CD4-positive, alpha-beta T cell (primary cell): ENCODE measurements at regions of chr11 and their contacts with region 1.

Region 1: DNA sequence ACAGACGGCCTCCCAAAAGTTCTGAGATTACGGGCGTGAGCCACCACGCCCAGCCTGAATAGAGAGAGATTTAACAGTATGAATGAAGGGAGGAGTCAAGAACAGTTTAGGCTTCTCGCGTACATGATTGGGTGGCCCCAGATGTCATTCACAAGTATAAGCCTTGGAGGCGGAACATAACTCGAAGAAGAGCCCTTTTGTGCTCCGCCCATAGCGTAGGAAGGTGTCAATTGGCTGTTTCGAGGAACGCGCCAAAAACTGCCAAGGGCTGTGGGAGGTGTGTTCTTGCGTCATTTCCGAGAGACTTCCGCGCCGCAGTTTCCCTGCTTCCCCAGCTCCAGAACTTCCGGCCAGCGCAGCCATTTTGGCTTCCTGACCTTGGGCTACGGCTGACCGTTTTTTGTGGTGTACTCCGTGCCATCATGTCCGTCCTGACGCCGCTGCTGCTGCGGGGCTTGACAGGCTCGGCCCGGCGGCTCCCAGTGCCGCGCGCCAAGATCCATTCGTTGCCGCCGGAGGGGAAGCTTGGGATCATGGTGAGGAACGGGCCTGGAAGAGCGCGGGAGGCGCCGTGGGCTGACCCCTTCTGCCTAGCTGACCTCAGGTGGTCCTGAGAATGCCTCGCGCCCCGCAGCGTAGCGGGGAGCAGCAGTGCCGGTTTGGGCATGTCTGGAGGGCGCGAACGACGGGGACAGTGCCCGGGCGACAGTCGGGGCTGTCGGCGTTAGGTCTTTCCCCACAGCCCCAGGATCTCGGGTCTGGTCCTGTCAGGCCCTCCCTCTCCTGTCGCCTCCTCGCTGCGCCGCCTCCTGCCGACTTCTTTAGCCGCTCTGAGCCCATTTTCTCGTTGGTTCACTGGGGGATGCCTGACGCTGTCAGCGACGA is at the start of gene COX8A:
- DNase-seq: peak; percentile 85 to 99 (median 90)
- ATAC-seq: peak; percentile 99
- H3K4me3 ChIP-seq: peak within 1 kb of the TSS; percentile 94
- H3K4me3 Mint-ChIP-seq: peak within 1 kb of the TSS; percentile 100
- H3K27ac ChIP-seq: peak within 1 kb of the TSS; percentile 90 to 95
- H3K27ac Mint-ChIP-seq: peak within 1 kb of the TSS; percentile 99
- H3K4me1 ChIP-seq: peaks cover 27% of the 10 kb centered on the region
- H3K4me1 Mint-ChIP-seq: peaks cover 25% of the 10 kb centered on the region
- H3K27me3 ChIP-seq: peaks cover 0 to 4% of the 10 kb centered on the region in 2 experiments
- H3K27me3 Mint-ChIP-seq: no peaks in the 10 kb centered on the region
- CTCF ChIP-seq: no peak
- total RNA-seq, gene COX8A: 89.1 to 105 TPM

Region 2: DNA sequence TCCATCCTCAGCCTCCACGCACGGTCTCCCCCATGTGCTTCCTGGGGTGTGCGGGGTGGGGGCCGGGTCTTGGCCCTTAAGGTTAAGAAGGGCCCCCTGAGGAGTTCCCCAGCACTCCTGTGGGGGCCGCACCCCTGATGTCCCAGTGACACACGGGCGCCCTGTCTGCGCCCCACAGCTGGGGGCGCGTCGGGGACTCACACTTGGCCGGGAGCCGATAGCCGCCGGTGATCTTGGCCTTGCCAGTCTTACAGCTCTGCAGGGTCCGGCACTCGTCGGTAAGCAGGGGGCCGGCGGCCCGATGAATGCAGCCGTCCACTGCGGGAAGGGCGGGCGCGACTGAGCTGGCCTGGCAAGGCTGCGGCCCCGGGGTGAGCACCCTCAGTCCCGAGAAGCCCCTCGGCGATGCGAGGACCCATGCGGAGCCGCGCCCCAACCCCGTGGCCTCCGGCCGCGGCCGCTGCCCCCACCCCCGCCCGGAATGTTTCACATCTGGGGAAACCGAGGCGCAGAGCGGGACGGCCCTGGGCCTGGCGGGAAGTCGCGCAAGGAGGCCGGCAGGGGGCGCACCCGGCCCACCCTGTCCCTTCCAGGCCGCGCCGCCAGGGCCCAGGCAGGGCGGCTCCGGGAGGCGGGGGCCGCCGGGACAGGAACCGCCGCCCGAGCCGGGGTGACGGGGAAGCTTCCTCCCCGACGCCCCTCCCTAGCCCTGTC is 25.7 kb after region 1 on chr11:
- CTCF ChIA-PET with region 1: no interaction called
- POLR2A ChIA-PET with region 1: interaction called, 10 read pairs
- intact Hi-C with region 1: no loop called
- DNase-seq: peak; percentile 53 to 91 (median 70)
- ATAC-seq: peak; percentile 76
- H3K4me3 ChIP-seq: peak overlapping the region; percentile 41
- H3K4me3 Mint-ChIP-seq: peak overlapping the region; percentile 11
- H3K27ac ChIP-seq: no peak overlapping the region
- H3K27ac Mint-ChIP-seq: no peak overlapping the region
- H3K4me1 ChIP-seq: peaks cover 28% of the 10 kb centered on the region
- H3K4me1 Mint-ChIP-seq: peaks cover 9% of the 10 kb centered on the region
- H3K27me3 ChIP-seq: peaks cover 0 to 3% of the 10 kb centered on the region in 2 experiments
- H3K27me3 Mint-ChIP-seq: no peaks in the 10 kb centered on the region
- CTCF ChIP-seq: peak; percentile 75

Region 3: DNA sequence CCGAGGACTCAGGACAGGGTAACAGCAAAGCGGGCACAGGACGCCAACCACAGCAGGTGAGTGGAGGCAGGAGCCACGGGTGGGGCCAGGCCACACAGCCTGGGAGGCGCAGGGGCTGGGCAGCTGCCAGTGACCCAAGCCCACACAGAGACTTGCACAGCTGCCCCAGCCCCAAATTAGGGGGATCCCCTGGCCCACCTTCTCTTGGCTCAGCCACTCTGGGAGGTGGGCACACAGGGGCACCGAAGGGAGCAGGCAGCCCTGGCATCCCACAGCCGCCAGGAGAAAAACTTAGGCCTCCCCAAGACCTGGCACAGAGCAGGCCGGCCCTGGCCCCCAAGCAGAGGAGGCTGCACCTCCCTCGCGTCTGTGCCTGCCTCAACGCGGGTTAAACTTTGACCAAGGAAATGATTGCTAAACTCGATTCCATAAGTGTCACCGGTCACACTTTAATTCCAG is 616.3 kb after region 1 on chr11 and contains the start of gene SLC22A12:
- CTCF ChIA-PET with region 1: no interaction called
- POLR2A ChIA-PET with region 1: no interaction called
- intact Hi-C with region 1: no loop called
- DNase-seq: no peak
- ATAC-seq: no peak
- H3K4me3 ChIP-seq: no peak within 1 kb of the TSS
- H3K4me3 Mint-ChIP-seq: no peak within 1 kb of the TSS
- H3K27ac ChIP-seq: no peak within 1 kb of the TSS
- H3K27ac Mint-ChIP-seq: no peak within 1 kb of the TSS
- H3K4me1 ChIP-seq: no peaks in the 10 kb centered on the region
- H3K4me1 Mint-ChIP-seq: no peaks in the 10 kb centered on the region
- H3K27me3 ChIP-seq: peaks cover 4% of the 10 kb centered on the region in 2 experiments
- H3K27me3 Mint-ChIP-seq: no peaks in the 10 kb centered on the region
- CTCF ChIP-seq: no peak
- total RNA-seq, gene SLC22A12: not detected